Activated T-helper 2 cell treated with anti-CD3 and anti-CD28 coated beads, Interferon-gamma antibody, Interleukin-2, Interleukin-4, amounts not matched to agents 10 μg/mL and 5 μg/mL and 100 μg/mL, durations not matched to agents 14 hours and 24 hours and 36 hours (primary cell): ENCODE measurements at regions of chr20 and their contacts with region 1.

Region 1: GRCh38 chr20:44137210-44137801 is 49.7 kb downstream of the JPH2 start:
- DNase-seq: no peak
- H3K4me3 Mint-ChIP-seq: no peak overlapping the region
- H3K27ac Mint-ChIP-seq: no peak overlapping the region
- H3K4me1 Mint-ChIP-seq: no peaks in the 10 kb centered on the region
- H3K27me3 Mint-ChIP-seq: peaks cover 11% of the 10 kb centered on the region

Region 2: GRCh38 chr20:44193801-44194200 is 56.5 kb after region 1 on chr20:
- intact Hi-C with region 1: loop called (anchors 5 kb)
- DNase-seq: no peak
- H3K4me3 Mint-ChIP-seq: no peak overlapping the region
- H3K27ac Mint-ChIP-seq: no peak overlapping the region
- H3K4me1 Mint-ChIP-seq: peaks cover 7% of the 10 kb centered on the region
- H3K27me3 Mint-ChIP-seq: peaks cover 12% of the 10 kb centered on the region